Right ventricle myocardium inferior (tissue), 1 donor: ENCODE measurements at regions of chr1 and their contacts with region 1.

Region 1: GRCh38 chr1:230426246-230427093 is at the start of gene PGBD5:
- DNase-seq: peak; percentile 86
- ATAC-seq: peak; percentile 96
- total RNA-seq, gene PGBD5: 15.5 TPM

Region 2: DNA sequence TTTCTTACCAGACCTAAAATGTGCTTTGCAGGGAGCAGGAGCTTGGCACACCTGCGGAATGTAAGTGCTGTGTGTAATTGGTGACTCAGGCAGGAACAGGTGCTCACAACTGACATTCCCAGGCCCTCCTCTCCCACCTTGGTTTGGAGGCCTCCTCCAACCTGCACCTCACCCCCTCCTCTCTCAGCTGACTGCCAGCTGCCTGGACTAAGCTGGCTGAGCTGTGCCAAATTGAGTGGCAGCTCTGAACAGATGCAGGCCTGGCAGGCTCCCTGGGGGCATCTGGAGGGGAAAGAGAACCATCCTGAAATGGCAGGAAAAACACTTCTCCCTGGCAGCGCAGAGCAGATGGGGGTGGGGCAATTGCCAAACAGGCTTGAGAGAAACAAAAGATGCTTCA is 91.3 kb after region 1 on chr1:
- intact Hi-C with region 1: loop called (anchors 5 kb)
- DNase-seq: no peak
- ATAC-seq: peak; percentile 61